Activated naive CD4-positive, alpha-beta T cell treated with anti-CD3 and anti-CD28 coated beads for 36 hours (primary cell): ENCODE measurements at regions of chr7 and their contacts with region 1.

Region 1: GRCh38 chr7:7182156-7183060 is at the start of gene C1GALT1:
- DNase-seq: peak; percentile 97
- H3K4me3 Mint-ChIP-seq: peak within 1 kb of the TSS; percentile 90
- H3K27ac Mint-ChIP-seq: peak within 1 kb of the TSS; percentile 98
- H3K4me1 Mint-ChIP-seq: peaks cover 19% of the 10 kb centered on the region
- H3K27me3 Mint-ChIP-seq: no peaks in the 10 kb centered on the region
- total RNA-seq, gene C1GALT1: 25.7 to 29.1 TPM

Region 2: GRCh38 chr7:7014827-7015610 is 167.4 kb before region 1 on chr7:
- CTCF ChIA-PET with region 1: no interaction called
- intact Hi-C with region 1: no loop called
- DNase-seq: no peak
- H3K4me3 Mint-ChIP-seq: no peak overlapping the region
- H3K27ac Mint-ChIP-seq: no peak overlapping the region
- H3K4me1 Mint-ChIP-seq: no peaks in the 10 kb centered on the region
- H3K27me3 Mint-ChIP-seq: peaks cover 9% of the 10 kb centered on the region

Region 3: DNA sequence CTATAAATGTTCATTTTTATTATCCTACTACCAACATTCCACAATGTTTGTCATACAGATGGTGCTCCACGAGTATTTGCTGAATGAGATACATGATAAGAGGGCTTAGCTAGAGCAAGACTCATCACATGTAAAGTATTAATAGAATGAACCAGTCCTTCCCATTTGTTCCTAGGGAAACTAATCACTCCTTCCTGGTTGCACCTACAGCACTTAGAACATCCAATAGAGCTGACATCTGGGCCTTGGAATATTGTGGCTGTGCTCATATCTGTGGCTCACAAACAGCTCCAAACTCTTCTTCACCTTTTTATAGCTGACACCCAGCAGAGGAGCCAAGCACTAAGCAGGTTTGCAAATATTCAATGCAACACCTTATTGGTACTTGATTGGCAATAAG is 91.9 kb before region 1 on chr7:
- CTCF ChIA-PET with region 1: no interaction called
- intact Hi-C with region 1: no loop called
- DNase-seq: no peak
- H3K4me3 Mint-ChIP-seq: no peak overlapping the region
- H3K27ac Mint-ChIP-seq: no peak overlapping the region
- H3K4me1 Mint-ChIP-seq: no peaks in the 10 kb centered on the region
- H3K27me3 Mint-ChIP-seq: peaks cover 3% of the 10 kb centered on the region

Region 4: DNA sequence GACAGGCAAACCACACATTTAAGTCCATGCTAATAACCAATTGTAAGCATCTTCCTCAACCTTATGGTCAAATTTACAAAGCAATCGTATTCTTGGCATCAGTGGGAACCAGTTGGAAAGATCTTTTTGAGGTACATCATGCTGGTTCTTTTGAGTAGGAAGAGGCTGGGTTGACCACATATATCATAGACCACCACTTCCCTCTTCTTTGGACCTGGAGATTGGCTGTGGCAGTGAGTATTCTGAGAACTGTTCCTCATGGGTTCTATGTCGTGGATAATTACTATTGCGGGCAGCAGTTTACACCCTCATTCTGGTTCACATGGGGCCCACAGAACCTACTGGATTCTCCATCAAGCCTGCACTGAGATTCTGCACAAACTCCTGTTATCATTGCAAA is 35.6 kb before region 1 on chr7:
- CTCF ChIA-PET with region 1: no interaction called
- intact Hi-C with region 1: no loop called
- DNase-seq: no peak
- H3K4me3 Mint-ChIP-seq: no peak overlapping the region
- H3K27ac Mint-ChIP-seq: no peak overlapping the region
- H3K4me1 Mint-ChIP-seq: peaks cover 10% of the 10 kb centered on the region
- H3K27me3 Mint-ChIP-seq: no peaks in the 10 kb centered on the region

Region 5: DNA sequence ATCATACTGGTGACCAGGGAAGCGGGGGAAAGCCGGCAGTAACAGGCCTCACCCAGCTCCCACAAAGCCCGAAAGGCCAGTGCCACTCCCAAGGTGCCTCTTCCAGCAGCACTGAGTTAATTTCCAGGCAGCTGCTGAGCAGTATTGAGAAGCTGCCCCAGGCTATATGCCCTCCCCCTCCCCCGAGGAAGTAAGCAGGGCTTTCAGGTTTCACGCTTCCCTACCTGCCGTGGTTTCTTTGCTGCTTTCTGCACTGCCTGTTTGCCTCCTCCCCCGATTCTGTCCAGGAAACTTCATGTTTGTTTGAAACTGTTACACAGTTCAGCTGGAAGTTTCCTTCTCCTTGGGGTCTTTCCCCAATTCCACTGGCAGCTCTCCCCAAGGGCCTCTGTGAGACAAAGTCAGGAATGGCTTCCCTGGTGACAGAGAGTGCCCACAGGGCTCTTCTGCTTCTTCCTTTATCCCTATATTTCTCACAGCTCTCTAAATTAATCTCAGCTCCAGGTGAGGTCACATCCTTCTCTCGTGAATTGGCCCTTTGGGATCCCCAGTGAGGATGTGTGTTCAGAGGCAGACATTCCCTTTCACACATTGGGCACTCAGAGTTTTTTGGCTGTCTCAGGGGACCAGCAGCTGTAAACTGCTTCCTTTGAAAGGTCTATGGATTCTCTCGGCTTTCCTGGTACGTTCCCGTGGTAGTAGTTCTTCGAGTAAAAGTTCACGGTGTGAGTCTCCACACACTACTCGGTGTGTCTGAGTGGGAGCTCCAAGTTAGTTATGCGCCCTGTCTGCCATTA is 19.4 kb after region 1 on chr7:
- CTCF ChIA-PET with region 1: interaction called, 4 read pairs
- intact Hi-C with region 1: loop called (anchors 1 kb)
- DNase-seq: peak; percentile 75
- H3K4me3 Mint-ChIP-seq: peak overlapping the region; percentile 60
- H3K27ac Mint-ChIP-seq: peak overlapping the region; percentile 68
- H3K4me1 Mint-ChIP-seq: peaks cover 72% of the 10 kb centered on the region
- H3K27me3 Mint-ChIP-seq: no peaks in the 10 kb centered on the region

Region 6: DNA sequence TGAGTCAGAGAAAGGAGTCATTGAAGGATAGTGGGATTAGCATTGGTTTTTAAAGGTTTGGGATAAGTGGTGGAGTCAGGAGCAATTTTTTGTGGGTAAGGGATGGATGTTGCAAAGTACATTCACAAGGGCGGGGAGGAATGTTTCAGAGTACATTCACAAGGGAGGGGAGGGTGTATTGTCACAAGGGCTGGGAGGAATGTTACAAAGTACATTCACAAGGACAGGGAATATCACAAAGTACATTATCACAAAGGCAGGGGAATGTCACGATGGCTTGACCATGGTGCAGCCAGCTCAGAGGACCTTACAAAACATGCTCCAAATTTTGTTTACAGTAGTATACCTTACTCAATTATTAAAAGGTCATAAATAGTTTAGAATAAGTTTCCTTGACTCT is 30.2 kb after region 1 on chr7:
- CTCF ChIA-PET with region 1: no interaction called
- intact Hi-C with region 1: no loop called
- DNase-seq: no peak
- H3K4me3 Mint-ChIP-seq: no peak overlapping the region
- H3K27ac Mint-ChIP-seq: no peak overlapping the region
- H3K4me1 Mint-ChIP-seq: peaks cover 30% of the 10 kb centered on the region
- H3K27me3 Mint-ChIP-seq: no peaks in the 10 kb centered on the region

Region 7: DNA sequence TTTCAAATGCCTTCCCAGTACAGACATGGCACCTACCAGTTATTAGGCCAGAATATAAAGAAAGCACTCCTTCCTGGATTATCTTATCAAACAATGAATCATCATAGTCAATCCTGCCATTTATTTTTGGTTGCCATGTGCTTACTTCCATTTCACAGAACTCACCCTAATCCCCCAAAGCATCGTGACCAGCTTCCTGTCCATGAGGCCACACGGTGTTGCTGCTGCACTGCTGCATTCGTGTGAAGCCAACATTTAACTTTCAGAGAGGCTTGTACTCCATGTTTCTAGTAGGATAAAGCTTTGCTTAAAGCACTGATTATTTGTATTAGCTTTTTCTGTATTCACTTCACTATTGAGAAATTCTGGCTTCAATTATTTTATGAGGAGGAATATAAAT is 338.9 kb after region 1 on chr7:
- CTCF ChIA-PET with region 1: no interaction called
- intact Hi-C with region 1: loop called (anchors 5 kb)
- DNase-seq: peak; percentile 6
- H3K4me3 Mint-ChIP-seq: no peak overlapping the region
- H3K27ac Mint-ChIP-seq: no peak overlapping the region
- H3K4me1 Mint-ChIP-seq: no peaks in the 10 kb centered on the region
- H3K27me3 Mint-ChIP-seq: no peaks in the 10 kb centered on the region

Region 8: DNA sequence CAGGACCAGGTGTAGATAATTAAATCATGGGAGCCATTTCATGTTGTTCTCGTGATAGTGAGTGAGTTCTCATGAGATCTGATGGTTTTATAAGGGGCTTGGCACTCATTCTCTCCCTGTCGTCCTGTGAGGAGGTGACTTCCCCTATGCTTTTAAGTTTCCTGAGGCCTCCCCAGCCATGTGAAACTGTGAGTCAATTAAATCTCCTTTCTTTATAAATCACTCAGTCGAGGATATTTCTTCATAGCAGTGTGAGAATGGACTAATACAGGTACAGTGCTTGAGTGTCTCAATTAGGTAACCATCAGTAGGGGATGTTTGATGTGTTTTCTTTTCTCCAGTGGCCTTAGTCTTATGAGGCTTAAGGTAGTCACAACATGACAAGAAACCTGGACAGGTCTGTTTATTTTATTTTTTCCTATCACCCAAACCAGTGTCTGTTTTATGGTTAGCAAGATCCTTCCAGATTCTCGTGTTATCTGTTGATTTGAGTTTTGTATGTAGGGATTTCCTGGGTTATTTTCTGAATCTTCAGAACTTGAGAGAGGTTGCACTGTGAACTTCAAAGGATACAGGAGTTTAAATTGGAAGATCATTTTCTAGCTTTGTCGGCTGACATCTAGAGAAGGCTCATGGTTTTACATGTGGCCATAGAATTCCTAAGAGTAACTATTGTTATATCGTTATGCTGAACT is 490.3 kb after region 1 on chr7:
- CTCF ChIA-PET with region 1: no interaction called
- intact Hi-C with region 1: loop called (anchors 2 kb)
- DNase-seq: peak; percentile 64
- H3K4me3 Mint-ChIP-seq: peak overlapping the region; percentile 31
- H3K27ac Mint-ChIP-seq: peak overlapping the region; percentile 79
- H3K4me1 Mint-ChIP-seq: peaks cover 45% of the 10 kb centered on the region
- H3K27me3 Mint-ChIP-seq: no peaks in the 10 kb centered on the region

Region 9: GRCh38 chr7:8125680-8126444 is 943.5 kb after region 1 on chr7:
- CTCF ChIA-PET with region 1: no interaction called
- intact Hi-C with region 1: loop called (anchors 2 kb)
- DNase-seq: peak; percentile 86
- H3K4me3 Mint-ChIP-seq: peak overlapping the region; percentile 71
- H3K27ac Mint-ChIP-seq: peak overlapping the region; percentile 96
- H3K4me1 Mint-ChIP-seq: peaks cover 57% of the 10 kb centered on the region
- H3K27me3 Mint-ChIP-seq: no peaks in the 10 kb centered on the region

Region 10: GRCh38 chr7:8295638-8296361 is 1113.4 kb after region 1 on chr7:
- CTCF ChIA-PET with region 1: no interaction called
- intact Hi-C with region 1: loop called (anchors 1 kb)
- DNase-seq: peak; percentile 43
- H3K4me3 Mint-ChIP-seq: no peak overlapping the region
- H3K27ac Mint-ChIP-seq: no peak overlapping the region
- H3K4me1 Mint-ChIP-seq: peaks cover 3% of the 10 kb centered on the region
- H3K27me3 Mint-ChIP-seq: peaks cover 3% of the 10 kb centered on the region